A673 (cell line): ENCODE measurements at regions of chr5 and their contacts with region 1.

Region 1: DNA sequence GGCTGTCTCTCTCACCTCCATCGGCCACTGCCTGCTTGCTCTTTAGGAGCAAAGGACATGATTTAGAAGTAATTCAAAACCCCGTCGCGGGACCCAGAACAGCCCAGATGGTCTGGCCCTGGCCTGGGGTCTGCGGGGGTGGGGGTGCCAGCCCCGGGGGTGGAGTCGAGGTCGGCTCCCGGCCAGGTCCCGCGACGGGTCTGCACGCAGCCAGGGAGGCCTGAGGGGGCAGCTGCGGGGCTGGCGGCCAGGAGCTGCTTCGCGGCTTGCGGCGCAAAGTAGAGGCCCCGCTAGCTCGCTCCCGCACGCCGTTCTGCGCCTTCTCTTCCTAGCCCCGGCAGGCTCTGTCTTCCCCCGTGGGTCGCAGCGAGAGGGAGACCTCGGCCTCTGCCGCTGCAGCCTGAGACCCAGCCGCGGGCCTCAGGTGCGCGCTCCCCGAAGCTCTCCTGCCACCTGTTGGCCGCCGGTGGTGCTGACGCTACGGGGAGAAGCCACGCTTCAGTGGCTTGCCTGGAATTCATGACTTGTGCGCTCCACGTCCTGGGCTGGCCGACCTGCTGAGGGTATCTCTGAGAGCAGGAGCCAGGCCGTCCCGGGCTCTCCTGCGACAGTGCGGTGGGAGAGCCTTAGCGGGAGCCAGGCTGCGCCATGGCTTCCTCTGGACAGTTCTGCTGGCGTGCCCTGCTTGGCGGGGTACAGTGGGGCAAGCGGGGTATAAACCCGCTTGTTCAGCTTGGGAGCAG is 157.2 kb upstream of the PITX1 start:
- DNase-seq: peak; percentile 82
- H3K4me3 ChIP-seq: peak overlapping the region; percentile 43
- H3K27ac ChIP-seq: no peak overlapping the region
- H3K4me1 ChIP-seq: no peaks in the 10 kb centered on the region
- H3K27me3 ChIP-seq: peaks cover 57% of the 10 kb centered on the region
- CTCF ChIP-seq: peak; percentile 96

Region 2: GRCh38 chr5:134917070-134917815 is 274.0 kb before region 1 on chr5:
- CTCF ChIA-PET with region 1: no interaction called
- POLR2A ChIA-PET with region 1: no interaction called
- intact Hi-C with region 1: loop called (anchors 10 kb)
- DNase-seq: no peak
- H3K4me3 ChIP-seq: no peak overlapping the region
- H3K27ac ChIP-seq: no peak overlapping the region
- H3K4me1 ChIP-seq: no peaks in the 10 kb centered on the region
- H3K27me3 ChIP-seq: no peaks in the 10 kb centered on the region
- CTCF ChIP-seq: peak; percentile 29; the same call in 1 of the 2 replicates